ENCODE measurements at regions of chr15 and their contacts with region 1.

Region 1: DNA sequence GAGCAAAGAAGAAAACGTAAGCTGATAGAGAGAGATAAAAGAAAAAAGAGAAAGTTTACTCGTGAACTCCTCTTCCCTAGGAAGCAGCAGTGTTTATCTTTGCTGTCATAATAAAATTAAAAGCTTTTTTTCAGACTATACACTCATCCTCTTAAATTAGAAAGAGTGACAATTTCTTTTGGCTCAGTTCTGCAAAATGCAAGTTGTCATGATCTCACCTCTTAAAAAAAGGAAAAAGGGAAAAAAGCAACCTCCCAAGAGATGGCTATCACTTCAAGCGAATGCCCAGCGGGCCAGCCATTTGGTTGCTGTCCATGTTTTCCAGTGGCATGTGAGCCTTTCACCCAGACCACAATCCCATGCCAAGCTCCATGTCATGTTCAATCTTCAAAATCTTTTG is 7.0 kb upstream of the THBS1 start:
- DNase-seq: no peak
- H3K4me3 ChIP-seq: no peak overlapping the region
- CTCF ChIP-seq: no peak

Region 2: GRCh38 chr15:38714309-38715072 is 859.4 kb before region 1 on chr15:
- in situ Hi-C with region 1: loop called (anchors 5 kb)
- DNase-seq: peak; percentile 95
- H3K4me3 ChIP-seq: no peak overlapping the region
- CTCF ChIP-seq: no peak

Measured in astrocyte of the cerebellum (primary cell).